ENCODE measurements at regions of chrX and their contacts with region 1.

Region 1: GRCh38 chrX:65985922-65986588 is 53.8 kb downstream of the VSIG4 start:
- DNase-seq: peak; percentile 77
- H3K4me3 Mint-ChIP-seq: no peak overlapping the region
- H3K27ac Mint-ChIP-seq: peak overlapping the region; percentile 84
- H3K4me1 Mint-ChIP-seq: peaks cover 27% of the 10 kb centered on the region
- H3K27me3 Mint-ChIP-seq: no peaks in the 10 kb centered on the region

Region 2: DNA sequence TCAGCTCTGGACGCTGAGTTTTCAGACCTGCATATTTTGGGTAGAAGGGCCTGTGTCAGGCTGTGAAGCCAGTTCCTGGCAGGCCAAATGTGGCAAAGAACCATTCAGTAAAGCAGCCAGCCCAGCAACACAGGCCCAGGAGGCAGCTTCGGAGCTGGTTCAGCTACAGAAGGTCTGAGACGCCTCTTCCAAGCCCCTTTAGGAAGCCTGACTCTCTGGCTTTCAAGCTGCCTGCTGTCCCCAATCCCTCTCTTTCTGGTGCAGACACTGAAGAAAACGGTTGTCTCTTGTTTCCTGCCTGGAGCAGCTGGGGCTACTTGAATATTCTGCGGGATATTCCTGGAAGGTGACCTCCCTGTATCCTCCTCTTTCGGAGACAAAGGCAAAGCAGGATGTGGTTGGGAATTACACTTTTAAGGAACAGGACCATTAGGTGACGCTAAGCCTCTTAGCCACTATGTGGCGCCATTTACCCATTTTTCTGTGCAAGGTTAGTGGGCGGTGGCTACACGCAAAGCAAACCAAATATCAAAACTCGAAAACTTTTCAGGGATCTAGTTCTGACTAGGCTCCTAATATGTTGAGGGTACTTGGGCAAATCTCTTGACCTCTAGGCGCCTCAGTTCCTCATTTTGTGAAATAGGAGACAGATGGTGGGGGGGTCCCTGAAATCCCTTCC is 404.3 kb before region 1 on chrX:
- CTCF ChIA-PET with region 1: interaction called, 7 read pairs
- intact Hi-C with region 1: loop called (anchors 1 kb)
- DNase-seq: peak; percentile 69
- H3K4me3 Mint-ChIP-seq: no peak overlapping the region
- H3K27ac Mint-ChIP-seq: no peak overlapping the region
- H3K4me1 Mint-ChIP-seq: peaks cover 6% of the 10 kb centered on the region
- H3K27me3 Mint-ChIP-seq: no peaks in the 10 kb centered on the region

Region 3: GRCh38 chrX:65706041-65706828 is 279.8 kb before region 1 on chrX:
- CTCF ChIA-PET with region 1: interaction called, 4 read pairs
- intact Hi-C with region 1: loop called (anchors 1 kb)
- DNase-seq: peak; percentile 83
- H3K4me3 Mint-ChIP-seq: peak overlapping the region; percentile 52
- H3K27ac Mint-ChIP-seq: peak overlapping the region; percentile 96
- H3K4me1 Mint-ChIP-seq: peaks cover 68% of the 10 kb centered on the region
- H3K27me3 Mint-ChIP-seq: no peaks in the 10 kb centered on the region

Region 4: DNA sequence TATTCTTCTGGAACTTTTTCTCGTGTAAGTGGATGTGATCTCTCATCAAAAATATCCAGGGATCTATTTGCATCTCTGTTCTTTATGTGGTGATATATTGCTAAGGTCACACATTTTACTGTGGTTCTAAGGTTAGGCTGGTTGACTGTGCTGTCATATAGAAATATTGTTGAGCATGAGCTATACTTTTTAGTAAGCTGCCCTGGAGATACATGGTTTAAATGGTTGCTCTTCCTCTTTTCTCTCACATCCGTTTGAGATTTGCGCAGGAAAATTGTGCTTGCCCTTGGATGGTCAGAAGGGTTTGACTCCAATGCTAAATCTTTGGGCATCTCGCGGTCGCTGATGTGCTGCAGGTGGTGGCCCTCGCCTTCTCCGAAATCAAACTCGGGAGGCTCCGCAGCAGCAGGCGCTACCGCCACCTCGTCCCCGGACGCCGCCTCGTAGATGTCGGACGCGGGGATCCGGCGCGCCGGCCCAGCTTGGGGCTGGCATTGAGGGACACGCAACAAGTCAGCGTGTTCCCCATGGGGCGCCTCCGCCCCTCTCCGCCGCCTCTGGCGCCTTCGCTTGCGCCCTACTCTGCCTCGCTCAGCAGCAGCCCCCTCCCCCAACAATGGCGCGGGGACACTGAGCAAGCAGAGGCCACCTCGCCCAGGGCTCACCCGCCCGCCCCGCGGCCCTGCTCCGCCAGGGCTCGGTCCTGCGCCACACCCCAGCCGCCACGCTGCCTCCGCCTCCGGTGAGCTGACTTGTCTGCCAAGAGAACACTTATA is 164.1 kb before region 1 on chrX:
- CTCF ChIA-PET with region 1: no interaction called
- intact Hi-C with region 1: loop called (anchors 1 kb)
- DNase-seq: peak; percentile 50
- H3K4me3 Mint-ChIP-seq: peak overlapping the region; percentile 69
- H3K27ac Mint-ChIP-seq: peak overlapping the region; percentile 24
- H3K4me1 Mint-ChIP-seq: peaks cover 5% of the 10 kb centered on the region
- H3K27me3 Mint-ChIP-seq: no peaks in the 10 kb centered on the region

Region 5: GRCh38 chrX:66015152-66015831 is 29.2 kb after region 1 on chrX:
- CTCF ChIA-PET with region 1: interaction called, 5 read pairs
- intact Hi-C with region 1: loop called (anchors 2 kb)
- DNase-seq: no peak
- H3K4me3 Mint-ChIP-seq: no peak overlapping the region
- H3K27ac Mint-ChIP-seq: no peak overlapping the region
- H3K4me1 Mint-ChIP-seq: peaks cover 58% of the 10 kb centered on the region
- H3K27me3 Mint-ChIP-seq: no peaks in the 10 kb centered on the region

Region 6: GRCh38 chrX:66728818-66729271 is 742.8 kb after region 1 on chrX:
- CTCF ChIA-PET with region 1: interaction called, 4 read pairs
- intact Hi-C with region 1: loop called (anchors 10 kb)
- DNase-seq: peak; percentile 64
- H3K4me3 Mint-ChIP-seq: peak overlapping the region; percentile 87
- H3K27ac Mint-ChIP-seq: peak overlapping the region; percentile 92
- H3K4me1 Mint-ChIP-seq: peaks cover 2% of the 10 kb centered on the region
- H3K27me3 Mint-ChIP-seq: no peaks in the 10 kb centered on the region